IMR-90 (cell line): ENCODE measurements at regions of chr15 and their contacts with region 1.

Region 1: DNA sequence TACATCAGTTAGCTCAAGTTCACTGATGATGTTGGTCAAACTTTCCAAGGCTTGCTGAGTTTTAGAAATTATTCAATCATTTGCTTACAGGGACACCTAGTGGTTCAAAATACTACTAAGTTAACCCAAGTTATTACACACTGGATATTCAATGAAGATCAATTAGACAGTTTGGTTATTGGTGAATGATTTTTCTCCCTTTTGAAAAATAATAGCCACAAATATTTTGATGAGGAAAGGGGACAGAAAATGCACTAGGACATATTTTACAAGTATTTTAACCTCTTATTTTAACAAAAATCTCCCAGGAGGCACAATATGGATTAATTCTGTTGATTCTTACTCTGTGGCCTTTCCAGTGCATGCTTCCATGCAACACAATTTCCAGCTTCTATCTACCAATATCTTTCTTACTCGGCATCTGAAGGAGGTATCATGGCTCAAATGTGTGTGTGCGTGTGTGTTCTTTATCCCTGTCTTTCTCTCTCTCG is 20.1 kb upstream of the GOLGA6L2 start:
- DNase-seq: peak; percentile 11
- ATAC-seq: peak; percentile 48
- H3K4me3 ChIP-seq: no peak overlapping the region
- H3K27ac ChIP-seq: no peak overlapping the region
- H3K4me1 ChIP-seq: no peaks in the 10 kb centered on the region
- H3K27me3 ChIP-seq: no peaks in the 10 kb centered on the region
- CTCF ChIP-seq: peak; percentile 41
- POLR2A ChIP-seq: no peak
- RAD21 ChIP-seq: peak; percentile 36

Region 2: GRCh38 chr15:23039151-23039916 is 427.8 kb before region 1 on chr15 and contains the start of gene TUBGCP5:
- CTCF ChIA-PET with region 1: no interaction called
- POLR2A ChIA-PET with region 1: no interaction called
- dilution Hi-C with region 1: no loop called
- in situ Hi-C with region 1: no loop called
- intact Hi-C with region 1: loop called (anchors 5 kb)
- DNase-seq: peak; percentile 98
- ATAC-seq: peak; percentile 98
- H3K4me3 ChIP-seq: peak within 1 kb of the TSS; percentile 65
- H3K27ac ChIP-seq: peak within 1 kb of the TSS; percentile 72
- H3K4me1 ChIP-seq: no peaks in the 10 kb centered on the region
- H3K27me3 ChIP-seq: no peaks in the 10 kb centered on the region
- CTCF ChIP-seq: peak; percentile 28; the same call in 1 of the 2 replicates
- POLR2A ChIP-seq: peak; percentile 84
- RAD21 ChIP-seq: no peak
- total RNA-seq, gene TUBGCP5: 19.4 and 20.0 TPM in 2 replicates

Region 3: GRCh38 chr15:23514484-23514883 is 47.3 kb after region 1 on chr15:
- CTCF ChIA-PET with region 1: no interaction called
- POLR2A ChIA-PET with region 1: no interaction called
- dilution Hi-C with region 1: no loop called
- in situ Hi-C with region 1: no loop called
- intact Hi-C with region 1: no loop called
- DNase-seq: no peak
- ATAC-seq: no peak
- H3K4me3 ChIP-seq: no peak overlapping the region
- H3K27ac ChIP-seq: no peak overlapping the region
- H3K4me1 ChIP-seq: no peaks in the 10 kb centered on the region
- H3K27me3 ChIP-seq: no peaks in the 10 kb centered on the region
- CTCF ChIP-seq: no peak
- POLR2A ChIP-seq: no peak
- RAD21 ChIP-seq: no peak